Transverse colon (tissue), 4 donors: ENCODE measurements at regions of chr12 and their contacts with region 1.

Region 1: DNA sequence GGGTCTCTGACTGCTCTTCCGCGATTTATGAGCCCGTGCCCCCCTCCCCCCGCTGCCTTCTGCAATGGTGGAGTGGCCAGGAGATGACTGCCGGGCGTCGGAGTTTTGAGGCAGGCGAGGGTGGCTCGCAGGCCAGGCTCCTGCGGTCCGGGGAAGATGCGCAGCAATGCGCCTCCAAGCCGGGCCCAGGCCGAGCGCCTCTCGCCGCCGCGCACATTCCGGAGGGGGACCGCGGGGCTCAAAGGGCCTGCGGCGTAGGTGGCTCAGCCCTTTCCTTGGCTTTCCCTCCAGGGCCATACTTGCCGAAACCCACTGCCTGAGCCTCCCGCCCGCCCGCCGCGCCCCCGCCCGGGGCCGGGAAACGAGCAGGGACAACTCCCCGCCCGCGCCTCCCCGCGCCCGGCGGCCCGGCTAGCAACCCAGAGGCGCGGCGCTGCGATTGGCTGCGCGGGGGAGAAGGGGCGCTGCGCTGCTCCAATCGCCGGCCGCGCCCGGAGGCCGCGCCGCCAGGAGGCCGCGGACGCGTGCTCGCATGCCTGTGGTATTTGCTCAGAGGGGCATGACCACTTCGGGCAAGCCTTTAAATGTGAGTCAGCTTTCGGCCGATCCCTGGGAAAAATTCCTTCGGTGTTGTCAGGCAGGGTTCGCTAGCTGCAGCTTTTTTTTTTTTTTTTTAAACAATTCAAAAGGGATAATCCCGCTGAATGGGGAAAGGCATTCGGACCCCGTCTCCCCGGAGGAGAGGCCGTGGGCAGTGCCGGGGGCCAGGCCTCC is 157.9 kb upstream of the PARP11 start:
- DNase-seq: peak; percentile 92
- H3K4me3 ChIP-seq: peak overlapping the region; percentile 42 to 56 (median 45)
- H3K27ac ChIP-seq: peak overlapping the region; percentile 84 to 88 (median 86)
- H3K4me1 ChIP-seq: peaks cover 8 to 21% (median 13%) of the 10 kb centered on the region in 4 donors
- H3K27me3 ChIP-seq: no peaks in the 10 kb centered on the region
- CTCF ChIP-seq: no peak
- EP300 ChIP-seq: no peak
- POLR2A ChIP-seq: peak; percentile 45

Region 2: DNA sequence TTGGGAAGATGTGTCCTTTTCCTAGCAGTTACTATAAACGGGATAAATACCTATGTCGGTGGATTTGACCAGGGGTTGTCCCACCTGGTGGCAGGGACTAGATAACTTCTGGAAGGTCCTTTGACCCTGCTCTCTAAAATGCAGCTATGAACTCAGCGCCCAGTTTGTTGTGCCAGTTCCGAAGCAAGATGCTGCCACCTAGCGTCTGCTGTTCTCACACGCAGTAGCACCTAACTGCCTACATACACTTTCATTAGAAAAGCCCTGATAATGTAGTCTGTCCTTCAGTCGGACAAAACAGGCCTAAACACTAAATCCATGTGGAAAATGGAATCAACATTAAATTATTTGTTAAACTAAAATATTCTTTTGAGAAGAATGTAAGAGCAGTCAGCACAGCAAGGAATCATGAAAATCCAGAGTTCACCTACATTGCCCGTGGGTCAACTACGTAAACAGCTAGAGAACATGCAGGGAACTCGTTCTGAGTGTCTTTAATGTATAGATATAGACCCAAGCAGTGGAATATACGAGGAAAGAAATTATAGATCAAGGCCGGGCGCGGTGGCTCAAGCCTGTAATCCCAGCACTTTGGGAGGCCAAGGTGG is 227.1 kb before region 1 on chr12:
- in situ Hi-C with region 1: no loop called
- intact Hi-C with region 1: no loop called
- DNase-seq: peak; percentile 79
- H3K4me3 ChIP-seq: no peak overlapping the region
- H3K27ac ChIP-seq: no peak overlapping the region
- H3K4me1 ChIP-seq: no peaks in the 10 kb centered on the region
- H3K27me3 ChIP-seq: no peaks in the 10 kb centered on the region
- CTCF ChIP-seq: peak; percentile 73 to 83 (median 80)
- EP300 ChIP-seq: no peak
- POLR2A ChIP-seq: no peak

Region 3: GRCh38 chr12:4287325-4288211 is 256.5 kb after region 1 on chr12:
- in situ Hi-C with region 1: loop called in 1 of 4 experiments (anchors 10 kb)
- intact Hi-C with region 1: no loop called
- DNase-seq: no peak
- H3K4me3 ChIP-seq: no peak overlapping the region
- H3K27ac ChIP-seq: peak overlapping the region; percentile 68 to 74 (median 69)
- H3K4me1 ChIP-seq: peaks cover 11 to 55% (median 38%) of the 10 kb centered on the region in 4 donors
- H3K27me3 ChIP-seq: no peaks in the 10 kb centered on the region
- CTCF ChIP-seq: no peak
- EP300 ChIP-seq: no peak
- POLR2A ChIP-seq: no peak